WTC11 (cell line): ENCODE measurements at regions of chr9 and their contacts with region 1.

Region 1: DNA sequence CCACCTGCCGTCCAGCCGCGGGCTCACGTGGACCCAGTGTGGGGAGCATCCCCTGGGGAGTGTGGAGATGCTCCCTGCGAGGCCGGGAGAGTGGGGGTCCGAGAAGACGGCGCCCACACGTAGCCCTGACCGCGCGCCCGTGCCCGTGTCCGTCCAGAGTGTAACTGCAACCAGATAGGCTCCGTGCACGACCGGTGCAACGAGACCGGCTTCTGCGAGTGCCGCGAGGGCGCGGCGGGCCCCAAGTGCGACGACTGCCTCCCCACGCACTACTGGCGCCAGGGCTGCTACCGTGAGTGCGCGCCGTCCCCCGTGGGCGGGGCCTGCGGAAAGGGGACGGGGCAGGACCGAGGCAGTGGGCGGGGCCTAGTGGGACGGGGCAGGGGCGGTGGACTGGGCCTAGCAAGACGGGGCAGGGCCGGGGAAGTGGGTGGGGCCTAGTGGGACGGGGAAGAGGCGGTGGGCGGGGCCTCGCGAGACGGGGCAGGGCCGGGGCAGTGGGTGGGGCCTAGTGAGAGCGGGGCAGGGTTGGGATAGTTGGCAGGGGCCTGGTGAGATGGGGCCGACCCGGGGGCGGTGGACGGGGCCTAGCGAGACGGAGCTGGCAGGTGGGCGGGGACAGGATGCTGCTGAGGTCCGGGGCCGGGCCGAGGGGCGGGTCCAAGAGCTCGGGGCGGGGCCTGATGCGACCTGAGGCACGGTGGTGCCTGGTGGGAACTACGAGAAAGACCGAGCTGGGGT is 79.1 kb downstream of the NTNG2 start:
- DNase-seq: peak; percentile 100
- ATAC-seq: peak; percentile 93
- H3K4me3 Mint-ChIP-seq: peak overlapping the region; percentile 89
- H3K27ac Mint-ChIP-seq: 0 out of 2 replicates have a peak overlapping the region, but pooled peaks have one; percentile 45
- H3K4me1 Mint-ChIP-seq: peaks cover 25% of the 10 kb centered on the region
- H3K27me3 Mint-ChIP-seq: peaks cover 39% of the 10 kb centered on the region
- CTCF ChIP-seq: no peak

Region 2: GRCh38 chr9:131755541-131756198 is 485.3 kb before region 1 on chr9:
- CTCF ChIA-PET with region 1: interaction called, 16 read pairs
- POLR2A ChIA-PET with region 1: no interaction called
- DNase-seq: peak; percentile 92
- ATAC-seq: peak; percentile 93
- H3K4me3 Mint-ChIP-seq: no peak overlapping the region
- H3K27ac Mint-ChIP-seq: peak overlapping the region; percentile 98
- H3K4me1 Mint-ChIP-seq: peaks cover 11% of the 10 kb centered on the region
- H3K27me3 Mint-ChIP-seq: peaks cover 2% of the 10 kb centered on the region; the same call in 1 of the 2 replicates
- CTCF ChIP-seq: peak; percentile 80

Region 3: DNA sequence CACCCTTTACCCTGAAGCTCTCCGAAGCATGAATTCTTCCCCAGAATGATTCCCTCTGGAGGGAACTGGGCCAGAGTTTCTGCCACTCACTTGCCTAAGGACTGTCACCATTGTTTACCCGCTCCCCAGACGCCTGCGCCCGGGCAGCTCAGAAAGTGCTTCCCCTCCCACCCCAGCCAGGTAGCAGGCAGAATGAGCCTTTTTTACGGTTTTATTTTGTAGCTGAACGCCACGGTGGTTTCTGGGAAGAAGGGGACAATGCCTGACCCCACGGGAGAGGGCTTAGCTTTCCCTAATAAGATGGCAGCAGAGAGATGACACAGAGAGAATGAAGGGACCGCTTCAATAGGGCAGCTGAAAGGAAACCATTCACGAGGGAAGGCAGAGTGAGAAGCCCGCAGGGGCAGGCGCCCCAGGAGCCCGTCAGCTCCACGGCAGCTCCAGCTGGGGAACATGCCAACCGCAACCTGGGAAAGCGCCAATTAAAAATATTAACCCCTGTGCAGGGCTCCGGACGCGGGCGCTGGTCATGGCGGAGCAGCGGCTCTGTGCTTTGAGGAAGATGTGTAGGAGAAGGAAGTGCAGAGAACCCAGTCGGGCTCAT is 99.5 kb before region 1 on chr9:
- CTCF ChIA-PET with region 1: interaction called, 16 read pairs
- POLR2A ChIA-PET with region 1: no interaction called
- DNase-seq: no peak
- ATAC-seq: peak; percentile 61
- H3K4me3 Mint-ChIP-seq: peak overlapping the region; percentile 80
- H3K27ac Mint-ChIP-seq: peak overlapping the region; percentile 42; the same call in 1 of the 2 replicates
- H3K4me1 Mint-ChIP-seq: peaks cover 40% of the 10 kb centered on the region
- H3K27me3 Mint-ChIP-seq: peaks cover 3% of the 10 kb centered on the region; the same call in 1 of the 2 replicates
- CTCF ChIP-seq: no peak

Region 4: GRCh38 chr9:132182314-132183091 is 58.4 kb before region 1 on chr9:
- CTCF ChIA-PET with region 1: interaction called, 140 read pairs
- POLR2A ChIA-PET with region 1: no interaction called
- DNase-seq: no peak
- ATAC-seq: peak; percentile 62
- H3K4me3 Mint-ChIP-seq: no peak overlapping the region
- H3K27ac Mint-ChIP-seq: no peak overlapping the region
- H3K4me1 Mint-ChIP-seq: peaks cover 49% of the 10 kb centered on the region
- H3K27me3 Mint-ChIP-seq: peaks cover 22% of the 10 kb centered on the region
- CTCF ChIP-seq: no peak

Region 5: DNA sequence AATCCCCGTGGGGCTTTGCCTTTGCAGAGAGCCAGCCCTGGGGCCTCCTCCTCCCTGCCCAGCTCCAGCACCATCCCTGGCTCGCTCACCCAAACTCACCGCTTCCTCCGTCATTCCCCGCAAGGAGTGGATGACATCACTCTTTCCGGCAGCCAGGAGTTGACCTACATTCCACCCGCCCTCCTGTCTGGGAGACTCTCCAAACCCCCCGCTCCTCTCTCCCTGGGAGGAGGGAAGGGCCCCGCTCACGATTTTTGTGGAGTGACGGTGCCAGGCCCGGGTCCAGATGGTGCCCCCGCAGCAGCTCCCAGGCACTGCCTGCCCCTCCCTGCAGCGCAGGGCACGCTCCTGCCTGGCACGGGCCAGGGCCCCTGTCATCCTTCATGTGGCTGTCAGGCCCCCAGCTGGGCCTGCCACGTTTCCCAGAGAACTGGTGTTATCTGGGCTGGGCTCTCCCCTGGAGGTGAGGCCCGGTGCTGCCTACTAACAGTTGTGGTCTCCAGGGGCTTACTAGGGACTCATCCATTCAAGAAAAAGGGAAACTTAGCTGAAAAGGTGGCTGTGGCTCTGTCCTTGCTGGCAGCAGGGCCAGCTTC is 26.8 kb before region 1 on chr9:
- CTCF ChIA-PET with region 1: interaction called, 21 read pairs
- POLR2A ChIA-PET with region 1: no interaction called
- DNase-seq: peak; percentile 64
- ATAC-seq: peak; percentile 91
- H3K4me3 Mint-ChIP-seq: no peak overlapping the region
- H3K27ac Mint-ChIP-seq: no peak overlapping the region
- H3K4me1 Mint-ChIP-seq: peaks cover 4% of the 10 kb centered on the region; the same call in 1 of the 2 replicates
- H3K27me3 Mint-ChIP-seq: no peaks in the 10 kb centered on the region
- CTCF ChIP-seq: no peak

Region 6: DNA sequence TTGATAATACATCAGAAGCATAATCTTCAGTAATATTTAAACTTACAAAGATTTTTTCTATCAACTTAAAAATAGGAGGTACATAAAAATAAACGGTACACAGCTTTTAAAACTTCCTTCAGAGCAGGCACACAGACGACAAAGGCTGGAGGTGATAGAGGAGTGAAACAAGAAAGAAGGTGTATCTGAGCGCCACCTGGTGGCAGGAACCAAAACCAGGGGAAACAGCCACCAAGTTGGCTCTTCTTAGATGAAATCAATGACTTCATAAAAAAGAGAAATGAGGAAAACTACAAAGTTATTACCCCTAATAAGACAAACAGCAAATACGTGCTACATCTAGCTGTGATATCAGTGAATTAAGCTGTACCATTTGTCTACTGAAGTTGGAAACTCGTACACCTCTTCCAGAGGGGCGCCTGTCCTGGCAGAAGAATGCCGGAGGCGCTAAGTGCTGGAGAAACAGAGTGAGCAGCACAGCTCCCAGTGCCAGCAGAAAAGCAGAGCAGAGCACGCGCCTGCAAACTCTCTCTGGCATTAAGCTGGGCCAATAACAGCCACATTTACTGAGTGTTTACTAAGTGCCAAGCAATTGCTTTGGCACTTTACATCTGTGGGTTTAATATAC is 27.9 kb after region 1 on chr9:
- CTCF ChIA-PET with region 1: interaction called, 12 read pairs
- POLR2A ChIA-PET with region 1: no interaction called
- DNase-seq: peak; percentile 80
- ATAC-seq: peak; percentile 87
- H3K4me3 Mint-ChIP-seq: no peak overlapping the region
- H3K27ac Mint-ChIP-seq: no peak overlapping the region
- H3K4me1 Mint-ChIP-seq: no peaks in the 10 kb centered on the region
- H3K27me3 Mint-ChIP-seq: no peaks in the 10 kb centered on the region
- CTCF ChIP-seq: peak; percentile 87